Head of caudate nucleus (tissue), 42 donors: ENCODE measurements at regions of chr12 and their contacts with region 1.

Region 1: DNA sequence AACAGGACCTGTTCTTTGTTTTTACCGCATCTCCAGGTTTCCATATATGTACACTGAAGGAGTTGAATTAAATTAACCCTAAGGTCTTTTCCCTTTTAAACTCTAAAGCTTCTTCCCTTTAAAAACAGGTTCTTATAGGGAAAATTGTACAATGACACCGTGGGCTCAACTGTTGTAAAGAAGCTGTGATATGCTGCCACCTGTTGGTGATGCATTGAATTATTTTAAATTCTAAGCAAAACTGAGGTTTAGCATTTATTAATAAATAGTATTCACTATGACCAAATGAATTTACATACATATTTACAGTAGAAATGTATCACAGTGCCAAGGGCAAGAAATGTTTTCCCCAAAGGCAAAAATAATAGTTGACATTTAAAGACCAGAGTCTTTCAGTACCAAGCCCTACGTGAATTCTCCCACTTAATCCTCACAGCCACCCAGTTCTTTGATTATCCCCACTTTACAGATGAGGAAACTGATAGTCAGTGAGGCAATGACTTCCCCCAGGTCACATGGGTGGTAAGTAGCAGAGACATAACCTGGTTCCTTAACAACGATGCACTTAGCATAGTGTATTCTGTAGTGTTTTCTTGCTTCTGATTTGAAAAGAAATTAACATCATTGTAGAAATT is 35.7 kb upstream of the TMEM263 start:
- DNase-seq: peak in 10 of 42 donors; percentile 18 to 61 (median 32)

Region 2: DNA sequence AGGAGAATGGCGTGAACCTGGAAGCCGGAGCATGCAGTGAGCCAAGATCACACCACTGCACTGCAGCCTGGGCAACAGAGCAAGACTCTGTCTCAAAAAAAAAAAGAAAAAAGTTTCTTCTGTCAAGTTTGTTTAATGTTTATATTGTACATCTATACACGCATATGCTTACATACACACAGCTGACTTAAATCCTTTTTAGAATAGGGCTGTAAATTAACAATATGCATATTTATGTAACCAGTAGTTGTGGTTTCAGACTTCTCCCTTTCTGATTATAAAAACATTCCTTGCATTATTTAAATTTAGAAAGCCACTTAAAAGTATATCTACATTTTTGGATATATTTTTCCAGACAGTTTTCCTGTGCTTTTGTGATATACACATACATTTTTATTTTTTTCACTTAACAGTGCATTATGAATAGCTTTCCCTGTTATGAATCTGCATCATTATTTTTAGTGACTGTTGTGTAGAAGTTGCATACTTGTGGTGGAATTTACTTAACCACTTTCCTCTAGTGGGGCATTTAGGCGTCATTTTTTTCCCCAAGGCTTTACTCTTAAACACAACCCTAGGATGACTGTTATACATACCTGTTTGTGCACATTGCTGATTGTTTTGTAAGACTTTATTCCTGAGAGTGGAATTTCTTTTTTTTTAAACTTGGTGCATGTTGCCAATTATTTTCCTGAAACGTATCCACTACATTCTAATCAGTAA is 533.1 kb before region 1 on chr12:
- intact Hi-C with region 1: loop called (anchors 5 kb)
- DNase-seq: no peak

Region 3: DNA sequence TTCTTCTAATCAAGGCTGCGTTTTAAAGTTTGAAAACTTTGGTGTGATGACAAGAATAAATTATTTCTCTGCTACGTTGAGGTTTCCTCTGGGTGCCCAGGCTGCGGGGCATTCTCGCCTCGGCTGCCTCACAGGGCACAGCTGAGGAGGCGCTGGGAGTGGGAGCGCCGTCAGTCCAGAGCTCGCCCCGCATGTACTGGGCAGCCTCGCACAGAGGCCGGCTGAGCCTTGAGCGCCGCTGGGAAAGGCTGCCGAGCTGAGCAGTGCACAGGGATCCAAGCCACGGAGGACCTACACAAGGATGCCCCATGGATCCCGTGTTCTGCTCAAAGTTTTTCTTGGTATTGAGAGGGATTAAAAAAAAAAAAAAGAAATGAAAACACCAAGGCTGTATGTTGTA is 325.6 kb before region 1 on chr12:
- intact Hi-C with region 1: loop called (anchors 10 kb)
- DNase-seq: peak in 19 of 42 donors; percentile 15 to 68 (median 39)

Region 4: DNA sequence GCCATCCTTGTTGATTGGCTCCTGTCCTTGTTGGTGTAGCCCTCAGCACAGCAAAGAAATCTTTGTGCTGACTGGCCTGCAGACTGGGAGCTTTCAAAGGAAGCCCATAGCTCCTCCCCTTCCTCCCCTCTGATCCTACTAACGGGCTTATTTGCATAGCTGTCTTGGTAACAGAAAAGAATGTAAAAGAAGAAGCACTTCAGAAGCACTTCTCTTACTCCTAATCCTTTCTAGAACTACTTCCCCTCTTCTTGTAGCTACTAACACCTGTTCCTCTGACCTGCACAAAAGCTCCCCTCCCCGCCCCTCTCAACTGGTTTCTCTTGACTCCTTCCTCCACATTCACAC is 159.9 kb before region 1 on chr12:
- intact Hi-C with region 1: no loop called
- DNase-seq: peak in 17 of 42 donors; percentile 33 to 75 (median 50)

Region 5: DNA sequence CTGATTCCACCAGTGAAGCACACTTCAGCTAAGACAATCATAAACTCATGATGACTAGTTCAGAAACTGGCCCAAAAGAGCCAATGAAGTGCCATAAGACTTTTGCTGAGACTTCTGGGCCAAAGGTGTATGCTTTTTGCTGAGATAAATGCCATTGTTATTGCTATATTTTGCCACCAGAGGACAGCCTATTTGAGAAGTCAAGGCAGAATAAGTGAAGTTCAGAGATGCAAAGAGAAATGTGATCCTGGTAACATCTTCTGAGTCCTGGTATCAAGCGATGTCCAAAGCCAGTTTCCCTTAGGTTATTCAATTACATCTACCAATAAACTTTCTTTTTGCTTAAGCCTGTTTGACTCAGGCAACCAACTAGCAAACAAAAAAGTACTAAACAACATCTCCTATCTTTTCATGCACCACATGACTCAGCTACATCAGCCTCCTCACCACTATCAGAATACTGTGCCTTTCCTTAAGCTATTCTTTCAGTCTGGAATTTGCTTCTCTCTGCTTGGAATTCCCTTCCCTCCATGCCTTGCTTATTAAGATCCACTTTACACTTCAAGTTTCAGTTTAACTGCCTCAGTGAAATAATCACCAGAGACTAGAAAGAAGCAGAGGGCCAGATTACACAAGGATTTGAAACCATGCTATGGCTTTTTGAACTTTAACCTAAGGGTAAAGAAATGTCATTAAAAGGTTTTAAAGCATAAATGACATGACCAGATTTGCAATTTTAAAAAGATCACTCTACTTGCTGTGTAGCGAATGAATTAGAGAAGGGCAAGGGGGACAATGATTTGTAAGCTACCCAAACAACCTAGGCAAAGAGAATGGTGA is 159.4 kb after region 1 on chr12:
- intact Hi-C with region 1: no loop called
- DNase-seq: no peak